ENCODE measurements at regions of chr15 and their contacts with region 1.

Region 1: DNA sequence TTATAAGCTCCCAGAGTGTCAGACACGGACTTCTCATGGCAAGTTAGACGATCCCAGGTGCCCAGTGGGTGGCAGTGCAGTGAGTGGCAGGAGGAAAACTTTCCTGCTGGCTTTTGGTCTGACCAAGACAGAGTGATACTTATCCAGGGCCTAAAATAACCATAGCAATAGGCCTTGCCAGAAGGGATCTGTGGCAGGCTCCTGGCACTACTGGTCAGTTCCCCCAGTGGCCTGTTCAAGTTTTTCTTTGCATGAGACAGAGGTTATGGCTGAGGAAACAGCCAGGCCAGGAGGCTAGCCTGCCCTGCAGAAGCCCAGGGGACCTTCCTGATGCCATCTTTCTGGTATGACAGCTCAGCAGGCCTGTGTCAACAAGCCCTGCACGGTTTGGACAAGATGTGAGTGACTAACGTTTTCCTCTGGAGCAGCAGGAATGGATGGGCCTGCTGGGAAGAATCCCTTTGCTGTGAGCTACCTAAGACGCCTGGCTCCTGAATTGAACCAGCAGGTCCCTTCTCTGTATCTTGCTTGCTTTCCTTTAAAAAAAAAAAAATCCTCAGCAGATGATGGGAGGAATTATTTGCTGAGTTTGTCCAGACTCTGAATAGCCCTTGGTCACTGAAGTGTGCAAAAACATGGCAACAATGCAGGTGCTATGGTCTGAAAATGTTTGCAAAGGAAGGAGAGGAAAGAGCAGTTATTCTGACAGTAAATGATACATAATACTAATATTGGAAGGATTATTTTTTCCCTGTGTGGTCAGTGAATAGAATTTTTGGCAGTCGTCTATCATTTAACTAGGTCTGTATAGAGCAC is 18.0 kb downstream of the SCG5 start:
- DNase-seq: no peak
- H3K4me3 Mint-ChIP-seq: no peak overlapping the region
- H3K27ac Mint-ChIP-seq: no peak overlapping the region
- H3K4me1 Mint-ChIP-seq: peaks cover 10% of the 10 kb centered on the region
- H3K27me3 Mint-ChIP-seq: no peaks in the 10 kb centered on the region

Region 2: GRCh38 chr15:31792611-31793385 is 866.8 kb before region 1 on chr15:
- intact Hi-C with region 1: no loop called
- DNase-seq: no peak
- H3K4me3 Mint-ChIP-seq: no peak overlapping the region
- H3K27ac Mint-ChIP-seq: no peak overlapping the region
- H3K4me1 Mint-ChIP-seq: no peaks in the 10 kb centered on the region
- H3K27me3 Mint-ChIP-seq: no peaks in the 10 kb centered on the region

Region 3: GRCh38 chr15:32790352-32790999 is 130.9 kb after region 1 on chr15:
- intact Hi-C with region 1: no loop called
- DNase-seq: no peak
- H3K4me3 Mint-ChIP-seq: no peak overlapping the region
- H3K27ac Mint-ChIP-seq: no peak overlapping the region
- H3K4me1 Mint-ChIP-seq: no peaks in the 10 kb centered on the region
- H3K27me3 Mint-ChIP-seq: peaks cover 5% of the 10 kb centered on the region

Region 4: DNA sequence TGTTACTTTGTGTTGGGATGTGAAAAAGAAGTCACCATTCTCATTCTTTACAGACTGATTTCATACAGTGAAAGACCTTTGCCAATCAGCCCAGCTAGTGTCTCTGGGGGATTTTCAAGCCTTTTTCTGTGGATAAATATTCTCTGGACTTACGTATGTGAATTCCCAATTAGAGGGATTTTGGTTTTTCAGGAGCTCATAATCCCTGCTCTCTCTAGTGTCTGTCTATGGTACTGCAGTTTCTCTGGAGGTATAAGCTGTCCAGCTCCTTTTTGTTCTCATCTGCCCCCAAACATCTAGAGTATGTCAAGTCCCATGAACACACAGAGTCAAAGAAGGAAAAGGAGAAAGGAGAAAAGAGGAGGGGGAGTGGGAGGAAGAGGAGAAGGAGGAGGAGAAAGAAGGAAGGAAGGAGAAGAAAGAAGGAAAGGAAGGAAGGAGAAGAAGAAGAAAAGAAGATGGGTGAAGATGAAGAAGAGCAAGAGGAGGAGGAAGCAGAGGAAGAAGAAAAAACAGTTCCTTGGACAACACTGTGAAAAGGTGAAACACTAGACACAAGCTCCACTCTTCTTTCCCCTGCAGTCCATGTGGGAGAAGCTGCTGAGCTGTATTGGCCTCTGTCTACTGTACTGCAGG is 276.9 kb after region 1 on chr15:
- intact Hi-C with region 1: loop called (anchors 10 kb)
- DNase-seq: no peak
- H3K4me3 Mint-ChIP-seq: no peak overlapping the region
- H3K27ac Mint-ChIP-seq: no peak overlapping the region
- H3K4me1 Mint-ChIP-seq: no peaks in the 10 kb centered on the region
- H3K27me3 Mint-ChIP-seq: peaks cover 15% of the 10 kb centered on the region

Region 5: GRCh38 chr15:32994810-32995424 is 335.4 kb after region 1 on chr15:
- intact Hi-C with region 1: loop called (anchors 5 kb)
- DNase-seq: no peak
- H3K4me3 Mint-ChIP-seq: no peak overlapping the region
- H3K27ac Mint-ChIP-seq: no peak overlapping the region
- H3K4me1 Mint-ChIP-seq: no peaks in the 10 kb centered on the region
- H3K27me3 Mint-ChIP-seq: peaks cover 10% of the 10 kb centered on the region